ENCODE measurements at regions of chr2 and their contacts with region 1.

Region 1: GRCh38 chr2:191637182-191638078 is 40.5 kb upstream of the NABP1 start:
- DNase-seq: peak in 3 of 9 experiments; percentile 18 to 63 (median 40)
- ATAC-seq: peak; percentile 94
- H3K4me3 ChIP-seq: no peak overlapping the region
- H3K4me3 Mint-ChIP-seq: peak overlapping the region; percentile 60
- H3K27ac ChIP-seq: peak overlapping the region in 1 of 2 experiments; percentile 47
- H3K27ac Mint-ChIP-seq: peak overlapping the region; percentile 91
- H3K4me1 ChIP-seq: peaks cover 36% of the 10 kb centered on the region
- H3K4me1 Mint-ChIP-seq: peaks cover 46% of the 10 kb centered on the region
- H3K27me3 ChIP-seq: no peaks in the 10 kb centered on the region
- H3K27me3 Mint-ChIP-seq: no peaks in the 10 kb centered on the region
- CTCF ChIP-seq: no peak

Region 2: GRCh38 chr2:190781604-190782198 is 855.7 kb before region 1 on chr2:
- CTCF ChIA-PET with region 1: no interaction called
- POLR2A ChIA-PET with region 1: no interaction called
- intact Hi-C with region 1: no loop called
- DNase-seq: peak in 8 of 9 experiments; percentile 6 to 74 (median 48)
- ATAC-seq: peak; percentile 63
- H3K4me3 ChIP-seq: no peak overlapping the region
- H3K4me3 Mint-ChIP-seq: no peak overlapping the region
- H3K27ac ChIP-seq: no peak overlapping the region
- H3K27ac Mint-ChIP-seq: no peak overlapping the region
- H3K4me1 ChIP-seq: no peaks in the 10 kb centered on the region
- H3K4me1 Mint-ChIP-seq: peaks cover 3% of the 10 kb centered on the region
- H3K27me3 ChIP-seq: no peaks in the 10 kb centered on the region
- H3K27me3 Mint-ChIP-seq: peaks cover 7% of the 10 kb centered on the region
- CTCF ChIP-seq: peak; percentile 70

Region 3: GRCh38 chr2:191566344-191566743 is 71.1 kb before region 1 on chr2:
- CTCF ChIA-PET with region 1: interaction called, 3 read pairs
- POLR2A ChIA-PET with region 1: no interaction called
- intact Hi-C with region 1: loop called in 1 of 2 experiments (anchors 5 kb)
- DNase-seq: peak; percentile 33 to 81 (median 72)
- ATAC-seq: peak; percentile 55
- H3K4me3 ChIP-seq: no peak overlapping the region
- H3K4me3 Mint-ChIP-seq: no peak overlapping the region
- H3K27ac ChIP-seq: no peak overlapping the region
- H3K27ac Mint-ChIP-seq: no peak overlapping the region
- H3K4me1 ChIP-seq: peaks cover 11% of the 10 kb centered on the region
- H3K4me1 Mint-ChIP-seq: peaks cover 18% of the 10 kb centered on the region
- H3K27me3 ChIP-seq: peaks cover 0 to 12% of the 10 kb centered on the region in 2 experiments
- H3K27me3 Mint-ChIP-seq: peaks cover 29% of the 10 kb centered on the region
- CTCF ChIP-seq: peak; percentile 80

Region 4: DNA sequence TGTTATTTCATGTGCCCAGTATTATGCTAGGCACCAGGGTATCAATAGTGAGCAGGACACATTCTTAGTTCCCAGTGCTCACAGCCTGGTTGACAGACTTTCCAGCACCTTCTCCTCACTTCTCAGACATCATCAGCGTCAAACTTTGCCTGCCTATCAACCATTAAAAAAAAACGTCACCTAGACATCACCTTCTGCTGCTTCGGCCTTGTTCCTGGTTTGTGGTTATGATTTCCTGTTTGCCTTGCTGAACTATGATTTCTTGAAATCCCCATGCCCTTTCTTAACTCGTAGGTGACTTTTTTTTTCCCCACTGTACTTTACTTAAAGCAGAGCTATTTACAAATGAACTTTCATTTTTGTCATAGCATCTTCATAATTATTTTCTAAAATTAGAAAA is 19.9 kb before region 1 on chr2:
- CTCF ChIA-PET with region 1: interaction called, 4 read pairs
- POLR2A ChIA-PET with region 1: interaction called, 6 read pairs
- intact Hi-C with region 1: loop called (anchors 2 kb)
- DNase-seq: peak; percentile 10 to 93 (median 49)
- ATAC-seq: peak; percentile 92
- H3K4me3 ChIP-seq: no peak overlapping the region
- H3K4me3 Mint-ChIP-seq: peak overlapping the region; percentile 42
- H3K27ac ChIP-seq: peak overlapping the region; percentile 12 to 76
- H3K27ac Mint-ChIP-seq: peak overlapping the region; percentile 86
- H3K4me1 ChIP-seq: peaks cover 26% of the 10 kb centered on the region
- H3K4me1 Mint-ChIP-seq: peaks cover 42% of the 10 kb centered on the region
- H3K27me3 ChIP-seq: no peaks in the 10 kb centered on the region
- H3K27me3 Mint-ChIP-seq: no peaks in the 10 kb centered on the region
- CTCF ChIP-seq: no peak

Region 5: GRCh38 chr2:191622374-191623320 is 14.8 kb before region 1 on chr2:
- CTCF ChIA-PET with region 1: interaction called, 4 read pairs
- POLR2A ChIA-PET with region 1: interaction called, 6 read pairs
- intact Hi-C with region 1: loop called (anchors 2 kb)
- DNase-seq: no peak
- ATAC-seq: no peak
- H3K4me3 ChIP-seq: no peak overlapping the region
- H3K4me3 Mint-ChIP-seq: no peak overlapping the region
- H3K27ac ChIP-seq: no peak overlapping the region
- H3K27ac Mint-ChIP-seq: no peak overlapping the region
- H3K4me1 ChIP-seq: peaks cover 25% of the 10 kb centered on the region
- H3K4me1 Mint-ChIP-seq: peaks cover 55% of the 10 kb centered on the region
- H3K27me3 ChIP-seq: no peaks in the 10 kb centered on the region
- H3K27me3 Mint-ChIP-seq: no peaks in the 10 kb centered on the region
- CTCF ChIP-seq: no peak